H1 (cell line): ENCODE measurements at regions of chr11 and their contacts with region 1.

Region 1: GRCh38 chr11:130159657-130160497 is at the start of gene ST14:
- DNase-seq: peak in 1 of 2 experiments; percentile 72
- H3K4me3 ChIP-seq: peak within 1 kb of the TSS; percentile 37 to 61 (median 44)
- H3K27ac ChIP-seq: no peak within 1 kb of the TSS
- H3K4me1 ChIP-seq: peaks cover 0 to 25% (median 11%) of the 10 kb centered on the region in 4 experiments; a peak in 6 of 7 replicates
- H3K27me3 ChIP-seq: peaks cover 4 to 51% (median 43%) of the 10 kb centered on the region in 4 experiments
- CTCF ChIP-seq: no peak
- EP300 ChIP-seq: no peak
- POLR2A ChIP-seq: no peak
- RAD21 ChIP-seq: no peak
- total RNA-seq, gene ST14: 22.4 and 25.7 TPM in 2 replicates

Region 2: GRCh38 chr11:130171534-130171933 is 11.7 kb after region 1 on chr11:
- CTCF ChIA-PET with region 1: interaction called, 10 read pairs
- POLR2A ChIA-PET with region 1: no interaction called
- DNase-seq: no peak
- H3K4me3 ChIP-seq: no peak overlapping the region
- H3K27ac ChIP-seq: no peak overlapping the region
- H3K4me1 ChIP-seq: no peaks in the 10 kb centered on the region; a peak in 1 of 7 replicates
- H3K27me3 ChIP-seq: peaks cover 4 to 38% (median 32%) of the 10 kb centered on the region in 4 experiments
- CTCF ChIP-seq: no peak
- EP300 ChIP-seq: no peak
- POLR2A ChIP-seq: no peak
- RAD21 ChIP-seq: no peak

Region 3: GRCh38 chr11:130457623-130458409 is 297.9 kb after region 1 on chr11:
- CTCF ChIA-PET with region 1: no interaction called
- POLR2A ChIA-PET with region 1: no interaction called
- DNase-seq: no peak
- H3K4me3 ChIP-seq: no peak overlapping the region
- H3K27ac ChIP-seq: no peak overlapping the region
- H3K4me1 ChIP-seq: no peaks in the 10 kb centered on the region
- H3K27me3 ChIP-seq: peaks cover 0 to 8% (median 5%) of the 10 kb centered on the region in 4 experiments; a peak in 4 of 7 replicates
- CTCF ChIP-seq: no peak
- EP300 ChIP-seq: no peak
- POLR2A ChIP-seq: no peak
- RAD21 ChIP-seq: no peak